ENCODE measurements at regions of chr1 and their contacts with region 1.

Region 1: GRCh38 chr1:21368515-21369289 is 71.2 kb upstream of the NBPF3 start:
- DNase-seq: peak; percentile 43 to 72
- H3K4me3 ChIP-seq: no peak overlapping the region
- H3K27ac ChIP-seq: no peak overlapping the region
- H3K4me1 ChIP-seq: no peaks in the 10 kb centered on the region; the same call in 1 of the 2 replicates
- H3K27me3 ChIP-seq: no peaks in the 10 kb centered on the region
- CTCF ChIP-seq: peak; percentile 96

Region 2: GRCh38 chr1:21232044-21232443 is 136.7 kb before region 1 on chr1:
- CTCF ChIA-PET with region 1: no interaction called
- POLR2A ChIA-PET with region 1: no interaction called
- intact Hi-C with region 1: loop called (anchors 1 kb)
- DNase-seq: peak in 1 of 2 experiments; percentile 27
- H3K4me3 ChIP-seq: no peak overlapping the region
- H3K27ac ChIP-seq: no peak overlapping the region
- H3K4me1 ChIP-seq: no peaks in the 10 kb centered on the region
- H3K27me3 ChIP-seq: no peaks in the 10 kb centered on the region
- CTCF ChIP-seq: peak; percentile 79

Region 3: GRCh38 chr1:21302747-21303715 is 65.7 kb before region 1 on chr1:
- CTCF ChIA-PET with region 1: interaction called, 3 read pairs
- POLR2A ChIA-PET with region 1: no interaction called
- intact Hi-C with region 1: loop called (anchors 2 kb)
- DNase-seq: peak in 1 of 2 experiments; percentile 33
- H3K4me3 ChIP-seq: no peak overlapping the region
- H3K27ac ChIP-seq: no peak overlapping the region
- H3K4me1 ChIP-seq: peaks cover 23% of the 10 kb centered on the region
- H3K27me3 ChIP-seq: no peaks in the 10 kb centered on the region
- CTCF ChIP-seq: no peak

Region 4: DNA sequence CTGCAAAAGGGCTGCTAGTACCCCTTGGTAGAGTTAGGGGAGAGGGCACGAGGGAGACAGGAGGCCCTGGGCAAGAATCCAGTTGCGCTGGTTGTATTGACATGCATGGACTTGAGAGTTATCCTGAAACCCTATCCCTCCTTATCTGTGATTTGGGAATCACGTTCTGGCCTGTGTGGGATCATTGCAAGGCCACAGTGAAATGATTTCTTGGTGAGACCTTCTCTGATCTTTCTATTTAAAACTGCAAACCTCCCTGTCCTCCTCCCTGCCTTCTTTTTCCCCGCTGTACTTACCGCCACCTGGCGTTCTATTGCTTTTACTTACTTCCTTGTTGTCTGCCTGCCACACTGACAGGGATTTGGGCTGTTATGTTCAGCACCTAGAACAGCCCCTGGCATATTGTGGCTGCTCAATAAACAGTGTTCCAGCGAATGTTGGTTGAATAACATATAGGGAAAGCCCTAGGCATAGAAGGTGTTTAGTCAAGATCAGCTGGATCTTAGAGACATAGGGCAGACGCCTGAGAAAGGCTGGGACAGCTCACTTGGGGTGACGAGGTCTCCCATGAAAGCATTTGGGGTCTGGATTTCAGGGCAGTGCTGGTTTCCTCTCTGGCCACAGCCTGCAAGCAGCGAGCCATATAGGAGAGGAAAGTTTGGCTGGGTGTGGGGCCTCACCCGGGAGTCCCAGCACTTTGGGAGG is 166.1 kb after region 1 on chr1:
- CTCF ChIA-PET with region 1: interaction called, 3 read pairs
- POLR2A ChIA-PET with region 1: no interaction called
- intact Hi-C with region 1: loop called (anchors 1 kb)
- DNase-seq: peak; percentile 32 to 43
- H3K4me3 ChIP-seq: no peak overlapping the region
- H3K27ac ChIP-seq: no peak overlapping the region
- H3K4me1 ChIP-seq: no peaks in the 10 kb centered on the region
- H3K27me3 ChIP-seq: no peaks in the 10 kb centered on the region
- CTCF ChIP-seq: peak; percentile 59

Region 5: DNA sequence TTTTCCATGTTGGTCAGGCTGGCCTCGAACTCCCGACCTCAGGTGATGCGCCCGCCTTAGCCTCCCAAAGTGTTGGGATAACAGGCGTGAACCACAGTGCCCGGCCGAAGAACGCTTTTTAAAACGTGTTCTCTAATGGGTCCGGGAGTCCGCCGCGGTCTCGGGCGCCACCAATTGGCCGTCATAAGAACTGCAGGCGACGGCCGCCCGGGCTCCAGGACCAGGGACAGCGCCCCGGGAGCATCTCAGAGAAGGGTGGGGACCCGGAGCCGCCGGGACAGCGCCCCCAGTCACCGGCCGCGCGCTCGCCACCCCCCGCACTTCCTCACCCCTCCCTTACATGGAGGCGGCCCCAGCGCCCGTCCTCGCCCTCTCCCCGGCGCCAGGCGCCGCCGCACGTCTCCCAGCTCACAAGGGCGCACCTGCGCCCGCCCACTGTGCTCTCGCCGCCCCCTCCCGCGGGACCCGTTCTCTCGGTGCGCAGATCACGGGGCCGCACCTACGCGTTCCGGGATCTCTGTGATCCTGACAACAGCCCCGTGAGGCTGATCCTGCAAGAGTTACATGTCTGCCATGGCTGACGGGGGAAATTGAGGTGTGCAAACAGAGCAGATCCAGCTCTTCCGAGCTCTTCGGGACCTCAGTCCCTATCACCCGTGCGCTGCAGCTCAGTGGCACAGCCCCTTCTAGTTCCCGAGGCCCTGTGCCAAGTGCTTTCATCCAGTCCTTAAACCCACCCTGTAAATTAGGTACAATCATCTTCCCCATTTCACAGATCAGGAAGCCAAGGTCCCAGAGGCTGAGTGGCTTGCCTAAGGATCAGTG is 290.6 kb after region 1 on chr1:
- CTCF ChIA-PET with region 1: interaction called, 4 read pairs
- POLR2A ChIA-PET with region 1: no interaction called
- intact Hi-C with region 1: loop called (anchors 1 kb)
- DNase-seq: peak; percentile 40 to 81
- H3K4me3 ChIP-seq: no peak overlapping the region
- H3K27ac ChIP-seq: no peak overlapping the region
- H3K4me1 ChIP-seq: peaks cover 15% of the 10 kb centered on the region
- H3K27me3 ChIP-seq: no peaks in the 10 kb centered on the region
- CTCF ChIP-seq: peak; percentile 89

Region 6: DNA sequence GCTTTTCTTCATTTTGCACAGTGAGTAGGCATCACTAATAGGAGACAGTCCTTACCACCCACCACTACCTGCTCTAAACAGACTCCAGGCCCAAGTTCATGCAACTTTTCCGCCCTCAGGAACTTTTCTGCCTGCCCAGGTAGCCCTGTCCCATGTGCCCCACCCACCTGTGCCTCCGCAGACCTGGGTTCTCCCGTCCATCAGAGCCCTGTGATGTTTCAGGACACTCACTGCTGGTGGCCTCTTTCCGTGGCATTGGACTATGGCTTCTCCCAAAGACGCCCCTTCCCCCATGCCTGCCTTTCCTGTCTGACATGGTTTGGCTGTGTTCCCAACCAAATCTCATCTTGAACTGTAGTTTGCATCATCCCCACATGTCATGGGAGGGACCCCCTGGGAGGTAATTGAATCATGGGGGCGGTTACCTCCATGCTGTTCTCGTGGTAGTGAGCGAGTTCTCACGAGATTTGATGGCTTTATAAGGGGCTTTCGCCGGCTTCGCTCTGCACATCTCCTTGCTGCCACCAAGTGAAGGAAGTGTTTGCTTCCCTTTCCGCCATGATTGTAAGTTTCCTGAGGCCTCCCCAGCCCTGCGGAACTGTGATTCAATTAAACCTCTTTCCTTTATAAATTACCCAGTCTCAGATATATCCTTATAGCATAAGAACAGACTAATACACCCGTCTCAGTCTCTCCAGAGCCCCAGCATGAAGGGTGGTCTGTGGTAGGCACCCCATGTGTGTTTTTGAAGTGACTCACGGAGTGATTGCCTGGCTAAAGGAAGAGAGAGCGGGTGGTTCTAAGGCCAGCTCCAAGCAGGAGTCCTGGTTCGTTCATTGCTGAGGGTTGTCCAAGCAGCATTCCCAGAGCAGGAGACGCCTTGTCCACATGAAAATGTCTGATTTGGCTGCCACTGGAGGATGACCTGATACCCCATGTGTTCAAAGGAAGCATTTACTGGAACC is 996.9 kb after region 1 on chr1:
- CTCF ChIA-PET with region 1: no interaction called
- POLR2A ChIA-PET with region 1: interaction called, 28 read pairs
- intact Hi-C with region 1: no loop called
- DNase-seq: no peak
- H3K4me3 ChIP-seq: no peak overlapping the region
- H3K27ac ChIP-seq: no peak overlapping the region
- H3K4me1 ChIP-seq: no peaks in the 10 kb centered on the region
- H3K27me3 ChIP-seq: peaks cover 36% of the 10 kb centered on the region
- CTCF ChIP-seq: no peak